Activated CD8-positive, alpha-beta T cell treated with anti-CD3 and anti-CD28 coated beads for 36 hours (primary cell): ENCODE measurements at regions of chr2 and their contacts with region 1.

Region 1: GRCh38 chr2:10784764-10785163 is 27.8 kb downstream of the PDIA6 start:
- DNase-seq: no peak
- ATAC-seq: no peak
- H3K4me3 Mint-ChIP-seq: no peak overlapping the region
- H3K27ac Mint-ChIP-seq: no peak overlapping the region
- H3K4me1 Mint-ChIP-seq: no peaks in the 10 kb centered on the region
- H3K27me3 Mint-ChIP-seq: no peaks in the 10 kb centered on the region
- CTCF ChIP-seq: no peak

Region 2: GRCh38 chr2:10721396-10722251 is 63.1 kb before region 1 on chr2 and contains the start of gene ATP6V1C2:
- CTCF ChIA-PET with region 1: no interaction called
- POLR2A ChIA-PET with region 1: no interaction called
- intact Hi-C with region 1: loop called (anchors 2 kb)
- DNase-seq: peak; percentile 12
- ATAC-seq: peak; percentile 60
- H3K4me3 Mint-ChIP-seq: peak within 1 kb of the TSS; percentile 21
- H3K27ac Mint-ChIP-seq: no peak within 1 kb of the TSS
- H3K4me1 Mint-ChIP-seq: peaks cover 5% of the 10 kb centered on the region
- H3K27me3 Mint-ChIP-seq: peaks cover 42% of the 10 kb centered on the region
- CTCF ChIP-seq: no peak
- total RNA-seq, gene ATP6V1C2: not detected